Left colon (tissue), 2 donors: ENCODE measurements at regions of chr6 and their contacts with region 1.

Region 1: DNA sequence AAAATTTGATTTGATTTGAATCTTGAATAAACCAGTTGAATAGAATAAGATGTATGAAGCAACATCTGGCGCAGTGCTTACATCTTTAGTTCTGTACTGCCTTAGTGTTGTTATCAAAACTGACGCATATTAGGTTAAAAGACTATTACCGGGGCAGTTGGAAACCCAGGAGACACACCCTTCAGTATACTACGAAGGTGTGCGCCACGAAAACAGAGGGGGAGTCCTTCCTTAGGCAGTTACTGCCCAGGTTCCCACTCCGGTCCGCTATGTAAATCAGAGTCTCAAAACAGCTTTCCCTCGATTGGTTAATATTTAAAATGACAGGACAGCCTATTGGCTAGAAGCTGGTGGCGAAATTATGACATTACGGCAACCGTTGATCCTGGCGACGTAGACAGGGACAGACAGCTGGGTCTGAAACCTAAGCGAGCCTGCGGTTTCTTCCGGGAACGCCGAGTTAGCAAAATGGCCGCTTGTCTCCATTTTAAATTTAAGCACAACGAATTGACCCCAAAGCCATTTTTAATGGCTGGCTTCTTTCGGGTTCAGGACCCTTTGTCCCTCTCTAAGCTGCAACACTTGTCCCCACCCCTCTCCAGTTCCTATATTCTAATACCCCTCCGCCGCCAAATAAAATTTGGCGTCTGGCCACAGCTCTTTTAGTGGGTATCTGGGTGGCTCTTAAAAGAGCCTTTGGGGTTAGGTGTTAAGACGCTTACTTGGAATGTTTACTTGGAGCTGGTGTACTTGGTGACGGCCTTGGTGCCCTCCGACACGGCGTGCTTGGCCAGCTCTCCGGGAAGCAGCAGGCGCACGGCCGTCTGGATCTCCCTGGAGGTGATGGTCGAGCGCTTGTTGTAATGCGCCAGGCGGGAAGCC is 35.8 kb downstream of the HFE start:
- DNase-seq: peak; percentile 96 to 99
- ATAC-seq: peak; percentile 62

Region 2: GRCh38 chr6:26156076-26156849 is 33.2 kb after region 1 on chr6:
- intact Hi-C with region 1: loop called in 1 of 2 experiments (anchors 5 kb)
- DNase-seq: peak; percentile 91 to 94
- ATAC-seq: peak; percentile 54

Region 3: GRCh38 chr6:26196846-26197648 is 74.0 kb after region 1 on chr6:
- intact Hi-C with region 1: loop called in 1 of 2 experiments (anchors 10 kb)
- DNase-seq: peak; percentile 72 to 89
- ATAC-seq: peak; percentile 47